ENCODE measurements at regions of chr17 and their contacts with region 1.

Region 1: DNA sequence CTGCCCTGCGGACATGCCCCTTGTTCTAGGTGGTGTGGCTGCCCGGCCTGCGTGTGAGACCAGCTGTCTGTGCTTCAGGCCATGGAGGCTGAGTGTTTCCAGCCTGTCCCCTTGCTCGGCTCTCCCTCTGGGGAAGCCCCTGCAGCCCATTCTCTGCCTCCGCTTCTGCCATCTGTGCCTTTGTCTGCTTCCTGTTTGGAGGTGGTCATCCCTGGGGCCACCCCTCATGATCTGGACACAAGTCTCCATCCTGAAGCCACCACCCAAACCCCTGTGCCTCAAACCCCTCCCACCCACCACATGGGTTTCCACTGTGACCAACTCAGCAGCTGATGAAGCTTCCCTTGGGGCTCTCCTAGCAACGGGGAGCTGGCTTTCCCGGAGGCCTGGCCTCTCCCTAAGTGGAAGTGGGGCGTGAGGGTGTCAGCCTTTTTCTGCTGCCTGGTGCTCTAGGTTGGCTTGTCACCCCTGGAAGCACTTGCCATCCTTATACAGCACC is 184.9 kb downstream of the SEC14L1 start:
- DNase-seq: peak; percentile 63
- ATAC-seq: no peak
- H3K4me3 ChIP-seq: no peak overlapping the region
- H3K27ac ChIP-seq: peak overlapping the region; percentile 85
- H3K4me1 ChIP-seq: peaks cover 53% of the 10 kb centered on the region
- H3K27me3 ChIP-seq: no peaks in the 10 kb centered on the region
- CTCF ChIP-seq: no peak

Region 2: DNA sequence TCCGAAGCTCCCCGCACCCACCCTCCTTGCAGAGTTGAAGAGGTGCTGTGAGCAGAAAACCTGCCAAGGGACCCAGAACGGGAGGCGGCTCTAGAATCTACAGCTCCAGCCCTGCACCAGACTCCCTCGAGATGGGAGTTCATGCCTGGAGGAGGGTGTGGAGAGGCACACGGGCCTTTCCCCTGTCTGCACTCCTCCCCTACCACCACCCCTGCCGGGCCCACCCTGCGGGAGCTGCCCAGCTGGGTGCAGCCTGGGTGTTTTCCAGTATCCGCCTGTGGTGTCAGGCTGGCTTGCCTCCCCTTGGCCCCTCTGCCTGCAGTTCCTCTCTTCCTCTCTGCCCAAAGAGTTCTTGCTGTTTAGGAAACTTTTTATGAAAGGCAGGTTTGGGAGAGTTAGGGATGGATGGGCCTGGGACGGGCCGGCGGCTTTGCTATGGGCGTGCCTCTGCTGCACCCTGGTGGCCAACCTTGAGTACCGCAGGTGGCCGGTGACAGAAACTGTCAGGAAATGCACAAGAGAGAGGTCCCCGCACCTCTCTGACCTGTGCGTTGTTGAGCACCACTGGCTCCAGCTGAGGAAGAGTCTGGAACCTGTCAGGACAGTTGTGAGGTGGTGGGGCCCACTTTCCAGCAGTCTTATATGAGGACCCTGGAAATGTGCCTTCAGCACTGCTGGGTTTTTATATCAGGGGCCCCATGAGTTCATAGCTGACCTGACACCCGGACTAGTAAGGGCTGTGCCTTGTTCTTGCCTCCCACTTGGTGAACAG is 169.2 kb after region 1 on chr17:
- intact Hi-C with region 1: loop called (anchors 5 kb)
- DNase-seq: peak; percentile 87
- ATAC-seq: peak; percentile 89
- H3K4me3 ChIP-seq: no peak overlapping the region
- H3K27ac ChIP-seq: no peak overlapping the region
- H3K4me1 ChIP-seq: peaks cover 27% of the 10 kb centered on the region
- H3K27me3 ChIP-seq: no peaks in the 10 kb centered on the region
- CTCF ChIP-seq: peak; percentile 97

Measured in upper lobe of right lung (tissue), 1 donor.